ENCODE measurements at regions of chr5 and their contacts with region 1.

Region 1: DNA sequence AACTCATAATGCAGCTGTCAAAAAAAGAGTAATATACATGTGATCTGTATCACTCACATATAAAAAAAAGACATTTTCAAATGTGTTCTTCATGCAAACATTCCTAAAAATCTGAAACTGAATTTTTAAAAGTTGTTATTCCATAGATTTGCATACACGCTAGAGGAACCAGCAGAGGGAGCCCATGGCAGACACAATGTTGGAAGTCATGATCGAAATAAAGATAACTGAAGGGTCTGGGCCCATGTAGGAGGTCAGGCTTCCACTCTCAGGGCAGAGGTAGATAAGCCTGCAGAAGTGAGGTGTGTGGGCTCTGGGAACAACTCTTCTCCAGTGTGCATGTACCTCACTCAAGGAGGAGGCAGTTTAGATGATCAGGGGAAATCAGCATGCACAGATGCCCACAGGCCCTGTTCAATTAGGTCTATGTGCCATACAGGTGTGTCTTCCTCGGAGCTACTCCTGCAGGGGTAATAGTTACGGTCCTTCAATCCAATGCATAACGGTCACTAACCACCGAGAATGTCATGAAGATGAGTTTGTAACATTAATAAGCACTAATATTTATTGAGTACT is 208.6 kb downstream of the EPB41L4A start:
- DNase-seq: peak; percentile 67
- ATAC-seq: peak; percentile 67

Region 2: DNA sequence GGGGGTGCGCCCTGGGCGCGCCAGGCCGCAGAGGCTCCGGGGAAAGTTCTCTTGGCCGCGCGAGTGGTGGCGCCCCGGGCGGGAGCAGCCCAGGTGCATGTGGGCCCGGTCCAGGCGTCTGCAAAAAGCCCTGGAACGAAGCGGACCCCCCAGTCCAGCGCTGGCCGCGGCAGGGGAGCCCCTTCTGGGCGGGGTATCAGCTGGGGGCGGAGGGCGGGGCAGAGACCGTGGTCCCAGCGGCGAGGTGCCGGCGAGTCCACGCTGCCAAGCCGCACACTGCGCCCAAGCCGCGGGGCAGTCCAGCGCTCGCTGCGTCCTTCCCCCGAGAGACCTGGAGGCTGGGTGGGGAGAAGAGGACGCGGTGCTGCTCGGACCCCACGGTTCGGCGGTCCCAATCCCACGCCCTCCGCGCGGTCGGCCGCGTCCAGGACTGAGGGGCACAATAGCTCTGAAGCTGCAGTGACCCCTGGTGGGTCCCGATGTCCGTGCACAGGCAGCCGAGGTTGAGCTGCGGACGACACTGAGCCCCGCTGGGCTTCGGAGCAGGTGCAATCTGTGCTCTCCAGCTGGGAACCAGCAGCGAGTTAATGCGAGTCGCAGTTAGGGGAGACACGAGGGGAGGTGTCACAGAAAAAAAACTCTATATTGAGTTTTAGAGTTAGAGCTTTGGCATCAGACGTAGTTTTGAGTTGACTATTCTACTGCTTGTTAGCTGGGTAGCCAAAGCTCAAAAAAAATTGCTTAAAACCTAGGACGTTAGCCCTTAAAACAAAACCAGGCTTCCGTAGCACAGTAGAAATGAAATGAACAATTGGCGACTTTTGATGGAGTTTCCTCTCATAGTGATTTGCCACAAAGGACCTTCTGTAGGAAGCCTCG is 209.7 kb after region 1 on chr5:
- intact Hi-C with region 1: loop called (anchors 10 kb)
- DNase-seq: peak; percentile 87
- ATAC-seq: peak; percentile 96

Measured in sciatic nerve (tissue), 2 donors.